Calu3 (cell line): ENCODE measurements at regions of chr7 and their contacts with region 1.

Region 1: GRCh38 chr7:128135515-128136214 is 104.4 kb upstream of the LRRC4 start:
- DNase-seq: peak; percentile 72
- H3K4me3 Mint-ChIP-seq: peak overlapping the region; percentile 70
- H3K27ac Mint-ChIP-seq: no peak overlapping the region
- H3K4me1 Mint-ChIP-seq: no peaks in the 10 kb centered on the region
- H3K27me3 Mint-ChIP-seq: peaks cover 66% of the 10 kb centered on the region
- CTCF ChIP-seq: peak; percentile 94

Region 2: DNA sequence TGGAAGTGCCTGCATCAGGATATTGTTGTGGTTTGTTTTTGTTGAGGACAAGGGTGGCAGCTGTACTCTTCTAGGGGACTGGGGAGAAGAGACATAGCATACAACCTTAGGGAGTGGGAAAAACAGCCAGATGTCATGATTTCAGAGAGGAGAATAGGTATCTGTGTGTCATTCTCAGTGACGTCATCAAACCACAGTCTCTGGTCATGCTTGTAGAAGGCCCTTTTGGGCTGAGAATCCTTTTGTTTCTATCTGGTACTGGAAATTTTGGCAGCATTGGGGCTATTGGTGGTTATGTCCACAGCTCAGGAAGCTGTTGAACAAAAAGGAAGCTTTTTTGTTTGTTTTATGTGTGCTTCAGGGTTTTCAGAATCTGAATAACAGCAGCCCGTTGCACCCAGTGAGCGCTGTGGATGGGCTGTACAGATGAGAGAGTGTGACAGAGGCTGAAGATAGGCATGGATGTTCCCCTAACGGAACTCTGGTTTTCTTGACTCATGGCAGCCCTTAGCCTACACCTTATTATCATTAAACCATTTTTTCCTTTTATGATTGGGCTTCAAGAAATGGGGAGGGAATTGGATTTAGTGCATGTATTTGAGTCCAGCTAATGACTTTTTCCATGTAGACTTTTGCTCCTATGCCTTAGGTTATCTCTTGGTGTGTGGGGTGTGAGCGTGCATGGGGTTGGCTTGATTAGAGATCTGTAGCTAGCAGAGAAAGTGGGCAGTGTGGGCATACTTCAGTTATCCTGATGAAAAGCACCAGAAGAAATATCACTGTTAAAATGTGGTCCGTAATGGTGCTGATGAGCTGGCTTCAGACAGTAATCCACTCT is 417.9 kb before region 1 on chr7:
- CTCF ChIA-PET with region 1: no interaction called
- intact Hi-C with region 1: loop called (anchors 10 kb)
- DNase-seq: no peak
- H3K4me3 Mint-ChIP-seq: no peak overlapping the region
- H3K27ac Mint-ChIP-seq: no peak overlapping the region
- H3K4me1 Mint-ChIP-seq: no peaks in the 10 kb centered on the region
- H3K27me3 Mint-ChIP-seq: no peaks in the 10 kb centered on the region
- CTCF ChIP-seq: no peak